IMR-90 (cell line): ENCODE measurements at regions of chr17 and their contacts with region 1.

Region 1: DNA sequence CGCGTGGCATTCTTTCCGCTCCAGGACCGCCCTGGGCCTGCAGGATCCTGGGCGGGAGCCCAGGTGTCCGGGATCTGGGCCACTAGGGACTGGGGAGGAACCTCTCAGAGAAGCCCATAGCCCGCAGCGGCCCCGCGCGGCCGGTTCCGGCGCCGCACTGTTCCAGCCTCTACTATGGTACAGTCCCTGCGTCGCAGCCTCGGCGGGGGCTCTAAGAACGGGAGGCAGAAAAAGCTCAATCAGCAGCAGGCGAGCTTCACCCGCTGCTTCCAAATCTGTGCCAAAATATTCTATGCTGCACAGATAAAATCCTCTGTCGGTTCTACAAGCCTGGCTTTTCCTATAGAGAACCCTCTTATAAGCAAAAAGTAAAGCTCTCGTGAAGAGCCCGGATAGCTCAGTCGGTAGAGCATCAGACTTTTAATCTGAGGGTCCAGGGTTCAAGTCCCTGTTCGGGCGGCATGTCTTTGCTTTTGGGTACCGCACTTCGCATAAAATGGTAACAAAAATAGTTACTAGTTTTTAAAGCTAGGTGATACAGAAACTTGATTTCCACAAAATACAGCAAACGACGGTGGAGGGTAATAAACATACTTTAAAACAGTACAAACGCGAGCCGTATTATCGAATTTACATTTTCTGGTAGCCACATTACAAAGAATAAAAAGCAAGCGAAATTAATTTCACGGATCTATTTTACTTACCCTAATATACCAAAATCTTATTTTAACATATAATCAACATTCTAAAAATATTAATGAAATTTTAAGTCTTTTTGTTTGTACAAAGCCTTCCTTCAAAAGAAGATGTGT is 661 bp upstream of the ALOXE3 start:
- DNase-seq: peak; percentile 80
- ATAC-seq: peak; percentile 59
- H3K4me3 ChIP-seq: peak overlapping the region; percentile 60
- H3K27ac ChIP-seq: no peak overlapping the region; the same call in 1 of the 2 replicates
- H3K4me1 ChIP-seq: peaks cover 8% of the 10 kb centered on the region; the same call in 1 of the 2 replicates
- H3K27me3 ChIP-seq: peaks cover 26% of the 10 kb centered on the region
- CTCF ChIP-seq: peak; percentile 90
- POLR2A ChIP-seq: no peak
- RAD21 ChIP-seq: peak; percentile 65

Region 2: DNA sequence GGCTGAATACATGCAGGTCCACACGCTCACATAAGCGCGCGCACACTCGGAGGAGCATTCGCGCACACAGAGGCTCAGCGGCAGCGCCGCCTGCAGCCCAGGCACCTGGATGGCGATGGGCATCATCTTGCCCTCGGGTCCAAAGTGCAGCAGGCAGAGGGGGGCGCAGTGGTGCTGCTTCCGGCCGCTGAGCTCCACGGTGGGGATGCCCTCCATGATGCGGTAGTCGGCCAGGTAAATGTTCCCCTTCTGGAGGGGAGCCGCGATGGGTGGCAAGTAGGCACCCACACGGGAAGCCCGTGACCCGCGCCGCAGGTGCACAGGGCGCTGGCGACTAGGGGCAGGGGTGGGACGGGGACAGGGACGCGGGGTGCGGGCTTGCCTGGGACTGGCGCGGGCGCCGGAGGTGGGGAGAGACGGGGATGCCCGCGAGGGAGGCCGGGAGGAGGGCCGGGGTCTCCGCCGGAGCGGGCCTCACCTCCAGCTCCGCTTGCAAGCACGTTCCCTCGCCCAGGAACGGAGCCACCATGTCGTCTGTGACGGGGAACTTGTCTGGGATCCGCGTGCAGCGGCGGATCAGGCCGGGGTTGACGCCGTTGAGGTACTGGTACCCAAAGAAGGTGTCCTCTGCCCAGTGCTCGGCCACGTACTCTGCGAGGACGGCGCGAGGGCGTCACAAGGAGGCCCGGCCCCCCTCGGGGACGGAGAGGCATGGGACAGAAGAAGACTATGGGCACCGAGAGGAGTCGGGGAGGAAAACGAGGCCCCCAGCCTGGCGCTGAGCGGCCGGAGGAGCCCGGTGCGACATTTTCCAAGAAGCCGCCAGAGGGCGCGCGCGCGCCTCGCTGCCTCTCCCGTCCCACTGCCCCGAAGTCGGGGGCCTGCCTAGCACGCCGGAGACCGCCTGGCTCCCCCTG is 39.4 kb before region 1 on chr17:
- CTCF ChIA-PET with region 1: interaction called, 3 read pairs
- POLR2A ChIA-PET with region 1: no interaction called
- dilution Hi-C with region 1: no loop called
- in situ Hi-C with region 1: loop called (anchors 5 kb)
- intact Hi-C with region 1: loop called (anchors 1 kb)
- DNase-seq: peak; percentile 33
- ATAC-seq: peak; percentile 98
- H3K4me3 ChIP-seq: peak overlapping the region; percentile 48
- H3K27ac ChIP-seq: no peak overlapping the region
- H3K4me1 ChIP-seq: 0 out of 2 replicates have a peak, but pooled peaks cover 1% of the 10 kb centered on the region
- H3K27me3 ChIP-seq: peaks cover 64% of the 10 kb centered on the region
- CTCF ChIP-seq: peak; percentile 77
- POLR2A ChIP-seq: no peak
- RAD21 ChIP-seq: peak; percentile 63

Region 3: DNA sequence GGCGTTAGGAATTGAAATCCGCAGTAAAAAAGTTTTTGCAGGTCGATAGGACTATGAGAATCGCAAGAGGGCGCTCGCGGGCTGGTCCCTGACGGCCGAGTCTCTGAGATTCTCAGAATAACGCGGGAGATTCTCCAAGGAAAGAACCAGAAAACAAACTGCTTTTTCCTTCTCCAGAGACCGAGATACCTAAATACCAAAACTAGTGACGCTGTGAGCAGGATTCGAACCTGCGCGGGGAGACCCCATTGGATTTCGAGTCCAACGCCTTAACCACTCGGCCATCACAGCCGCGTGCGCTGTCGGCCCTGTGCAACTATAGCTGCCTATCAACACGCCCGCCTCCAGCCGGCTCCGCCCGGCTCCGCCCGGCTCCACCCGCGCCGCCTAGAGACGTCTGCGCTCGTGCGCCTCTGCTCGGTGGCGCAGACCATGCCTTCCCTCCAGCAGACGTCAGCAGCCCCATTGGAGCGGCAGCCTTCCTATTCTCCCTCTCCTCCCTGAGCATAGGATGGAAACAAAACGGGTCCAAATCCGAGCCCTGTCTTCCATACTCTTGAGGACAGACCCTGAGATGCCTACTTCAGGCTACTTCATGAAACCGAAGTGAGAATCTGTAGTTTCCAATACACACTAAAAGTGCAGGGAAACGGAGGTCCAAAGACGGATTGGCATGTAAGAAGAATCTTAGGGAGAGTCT is 19.8 kb after region 1 on chr17:
- CTCF ChIA-PET with region 1: interaction called, 24 read pairs
- POLR2A ChIA-PET with region 1: no interaction called
- dilution Hi-C with region 1: no loop called
- in situ Hi-C with region 1: no loop called
- intact Hi-C with region 1: no loop called
- DNase-seq: peak; percentile 98
- ATAC-seq: peak; percentile 86
- H3K4me3 ChIP-seq: peak overlapping the region; percentile 55
- H3K27ac ChIP-seq: peak overlapping the region; percentile 3; the same call in 1 of the 2 replicates
- H3K4me1 ChIP-seq: peaks cover 4% of the 10 kb centered on the region
- H3K27me3 ChIP-seq: no peaks in the 10 kb centered on the region
- CTCF ChIP-seq: peak; percentile 95
- POLR2A ChIP-seq: peak; percentile 91
- RAD21 ChIP-seq: peak; percentile 70

Region 4: GRCh38 chr17:8189711-8190477 is 70.9 kb after region 1 on chr17 and contains the start of gene BORCS6:
- CTCF ChIA-PET with region 1: interaction called, 6 read pairs
- POLR2A ChIA-PET with region 1: no interaction called
- dilution Hi-C with region 1: no loop called
- in situ Hi-C with region 1: no loop called
- intact Hi-C with region 1: loop called (anchors 1 kb)
- DNase-seq: peak; percentile 98
- ATAC-seq: peak; percentile 49
- H3K4me3 ChIP-seq: peak within 1 kb of the TSS; percentile 74
- H3K27ac ChIP-seq: peak within 1 kb of the TSS; percentile 69
- H3K4me1 ChIP-seq: peaks cover 13% of the 10 kb centered on the region
- H3K27me3 ChIP-seq: no peaks in the 10 kb centered on the region
- CTCF ChIP-seq: no peak
- POLR2A ChIP-seq: peak; percentile 59
- RAD21 ChIP-seq: no peak
- total RNA-seq, gene BORCS6: 2.7 and 3.1 TPM in 2 replicates

Region 5: GRCh38 chr17:8248751-8249607 is 130.0 kb after region 1 on chr17 and contains the start of gene PFAS:
- CTCF ChIA-PET with region 1: interaction called, 4 read pairs
- POLR2A ChIA-PET with region 1: no interaction called
- dilution Hi-C with region 1: loop called (anchors 25 kb)
- in situ Hi-C with region 1: no loop called
- intact Hi-C with region 1: no loop called
- DNase-seq: peak; percentile 89
- ATAC-seq: peak; percentile 74
- H3K4me3 ChIP-seq: peak within 1 kb of the TSS; percentile 76
- H3K27ac ChIP-seq: peak within 1 kb of the TSS; percentile 80
- H3K4me1 ChIP-seq: no peaks in the 10 kb centered on the region; the same call in 1 of the 2 replicates
- H3K27me3 ChIP-seq: no peaks in the 10 kb centered on the region
- CTCF ChIP-seq: no peak
- POLR2A ChIP-seq: peak; percentile 54
- RAD21 ChIP-seq: no peak
- total RNA-seq, gene PFAS: 22.2 and 26.2 TPM in 2 replicates